ENCODE measurements at regions of chr2 and their contacts with region 1.

Region 1: GRCh38 chr2:29309090-29310029 is 194.1 kb downstream of the CLIP4 start:
- DNase-seq: peak; percentile 88
- H3K4me3 Mint-ChIP-seq: no peak overlapping the region
- H3K27ac Mint-ChIP-seq: no peak overlapping the region
- H3K4me1 Mint-ChIP-seq: peaks cover 26% of the 10 kb centered on the region
- H3K27me3 Mint-ChIP-seq: peaks cover 28% of the 10 kb centered on the region

Region 2: GRCh38 chr2:29115797-29116781 is 193.3 kb before region 1 on chr2:
- intact Hi-C with region 1: loop called (anchors 10 kb)
- DNase-seq: peak; percentile 93
- H3K4me3 Mint-ChIP-seq: peak overlapping the region; percentile 85
- H3K27ac Mint-ChIP-seq: peak overlapping the region; percentile 91
- H3K4me1 Mint-ChIP-seq: peaks cover 43% of the 10 kb centered on the region
- H3K27me3 Mint-ChIP-seq: peaks cover 5% of the 10 kb centered on the region

Region 3: DNA sequence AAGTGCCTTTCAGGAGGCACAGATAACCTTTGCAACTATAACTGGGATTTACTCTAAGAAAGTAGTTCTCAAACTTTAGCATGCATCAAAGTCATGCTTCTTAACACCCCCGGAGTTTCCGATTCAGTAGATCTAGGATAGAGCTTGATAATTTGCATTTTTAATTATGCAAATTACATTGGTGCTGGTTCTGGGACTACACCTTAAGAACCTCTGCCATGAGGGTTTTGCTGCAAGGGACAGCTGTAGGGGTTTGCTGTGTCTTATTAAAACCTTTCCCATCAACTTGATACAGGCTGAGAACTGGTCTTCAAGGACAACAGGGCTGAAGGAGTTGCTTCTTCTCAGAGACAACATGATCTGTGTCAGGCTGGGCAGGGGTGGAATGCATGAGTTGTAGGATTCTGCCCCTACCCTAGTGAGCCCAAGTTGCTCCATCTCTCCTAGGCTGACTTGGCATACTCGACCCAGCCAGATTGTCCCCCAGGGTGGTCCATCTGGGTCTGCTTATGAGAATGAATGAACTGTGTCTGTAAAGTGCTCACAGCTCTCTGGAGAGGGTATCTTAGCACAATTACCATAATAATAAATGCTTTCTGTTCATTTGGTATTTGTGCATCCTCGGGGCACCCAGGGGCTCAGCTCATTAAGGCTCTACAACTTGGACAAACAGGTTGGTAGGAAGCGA is 38.6 kb after region 1 on chr2:
- intact Hi-C with region 1: loop called (anchors 2 kb)
- DNase-seq: no peak
- H3K4me3 Mint-ChIP-seq: no peak overlapping the region
- H3K27ac Mint-ChIP-seq: no peak overlapping the region
- H3K4me1 Mint-ChIP-seq: no peaks in the 10 kb centered on the region
- H3K27me3 Mint-ChIP-seq: peaks cover 16% of the 10 kb centered on the region

Region 4: GRCh38 chr2:29841386-29842004 is 532.1 kb after region 1 on chr2:
- intact Hi-C with region 1: loop called (anchors 2 kb)
- DNase-seq: peak; percentile 74
- H3K4me3 Mint-ChIP-seq: no peak overlapping the region
- H3K27ac Mint-ChIP-seq: no peak overlapping the region
- H3K4me1 Mint-ChIP-seq: no peaks in the 10 kb centered on the region
- H3K27me3 Mint-ChIP-seq: peaks cover 7% of the 10 kb centered on the region

Measured in activated CD4-positive, alpha-beta T cell treated with anti-CD3 and anti-CD28 coated beads, Interleukin-2, amount 10 ng/mL, durations not matched to agents 24 days and 14 days (primary cell).